ENCODE measurements at regions of chr2 and their contacts with region 1.

Region 1: GRCh38 chr2:7552825-7553570 is 635.8 kb downstream of the RNF144A start:
- DNase-seq: no peak
- H3K4me3 ChIP-seq: no peak overlapping the region
- H3K27ac ChIP-seq: no peak overlapping the region
- H3K4me1 ChIP-seq: no peaks in the 10 kb centered on the region
- H3K27me3 ChIP-seq: no peaks in the 10 kb centered on the region
- CTCF ChIP-seq: no peak
- POLR2A ChIP-seq: no peak

Region 2: GRCh38 chr2:8334866-8335325 is 781.9 kb after region 1 on chr2:
- intact Hi-C with region 1: loop called (anchors 5 kb)
- DNase-seq: no peak
- H3K4me3 ChIP-seq: no peak overlapping the region
- H3K27ac ChIP-seq: no peak overlapping the region
- H3K4me1 ChIP-seq: no peaks in the 10 kb centered on the region
- H3K27me3 ChIP-seq: no peaks in the 10 kb centered on the region
- CTCF ChIP-seq: no peak
- POLR2A ChIP-seq: no peak

Measured in vagina (tissue), 2 donors.